Activated naive CD4-positive, alpha-beta T cell treated with anti-CD3 and anti-CD28 coated beads for 36 hours (primary cell): ENCODE measurements at regions of chr6 and their contacts with region 1.

Region 1: DNA sequence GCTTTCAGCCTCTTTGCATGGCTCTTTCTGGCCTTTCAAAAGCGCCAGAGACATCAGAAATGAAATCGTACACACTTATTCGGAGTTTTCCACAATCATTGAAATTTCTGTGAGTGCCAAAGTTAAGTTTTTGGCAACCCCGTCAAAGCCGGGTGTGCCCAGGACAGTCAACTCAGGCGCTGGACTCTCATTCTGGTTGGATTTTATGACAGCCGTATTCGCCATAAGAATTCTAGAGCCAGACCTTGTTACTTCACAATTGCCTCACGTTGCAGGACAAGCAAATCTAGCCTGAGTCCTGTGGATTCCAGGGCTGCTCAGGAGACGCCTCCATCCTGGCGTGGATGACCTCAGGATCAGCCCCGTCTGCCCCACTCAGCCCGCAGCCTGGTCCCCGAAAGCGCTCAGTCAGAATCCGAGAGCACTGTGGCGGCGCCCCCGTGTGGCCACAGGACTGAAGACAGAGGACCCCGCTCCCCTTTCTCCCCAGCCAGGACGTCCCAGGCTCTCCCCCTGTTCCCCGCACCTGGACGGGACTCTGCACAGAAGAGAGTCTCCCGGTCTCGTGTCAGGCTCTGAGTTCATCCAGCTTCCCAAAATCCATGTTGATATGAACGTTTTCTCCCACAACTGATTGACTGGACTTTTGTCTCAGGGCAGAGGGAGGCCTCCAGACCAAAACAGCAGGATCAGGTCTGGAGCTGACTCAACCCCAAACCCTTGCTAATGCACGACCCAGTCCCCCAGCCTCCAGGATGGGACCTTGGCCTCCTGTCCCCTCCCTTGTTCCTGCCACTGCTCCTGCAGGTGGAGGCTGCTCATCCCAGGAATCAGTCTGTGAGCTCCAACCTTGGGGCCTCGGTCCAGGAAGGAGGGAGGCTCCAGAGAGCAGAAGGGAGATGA is 38.2 kb downstream of the MICA start:
- DNase-seq: peak; percentile 89
- H3K4me3 Mint-ChIP-seq: no peak overlapping the region
- H3K27ac Mint-ChIP-seq: no peak overlapping the region
- H3K4me1 Mint-ChIP-seq: peaks cover 4% of the 10 kb centered on the region
- H3K27me3 Mint-ChIP-seq: peaks cover 30% of the 10 kb centered on the region

Region 2: GRCh38 chr6:31396422-31397152 is 45.0 kb before region 1 on chr6:
- CTCF ChIA-PET with region 1: interaction called, 44 read pairs
- intact Hi-C with region 1: loop called (anchors 1 kb)
- DNase-seq: peak; percentile 95
- H3K4me3 Mint-ChIP-seq: no peak overlapping the region
- H3K27ac Mint-ChIP-seq: no peak overlapping the region
- H3K4me1 Mint-ChIP-seq: peaks cover 19% of the 10 kb centered on the region
- H3K27me3 Mint-ChIP-seq: no peaks in the 10 kb centered on the region

Region 3: GRCh38 chr6:31403283-31403989 is 38.2 kb before region 1 on chr6 and contains the start of gene MICA:
- CTCF ChIA-PET with region 1: interaction called, 44 read pairs
- intact Hi-C with region 1: no loop called
- DNase-seq: peak; percentile 77
- H3K4me3 Mint-ChIP-seq: peak within 1 kb of the TSS; percentile 92
- H3K27ac Mint-ChIP-seq: peak within 1 kb of the TSS; percentile 17
- H3K4me1 Mint-ChIP-seq: peaks cover 62% of the 10 kb centered on the region
- H3K27me3 Mint-ChIP-seq: no peaks in the 10 kb centered on the region
- total RNA-seq, gene MICA: 10.2 to 10.4 TPM

Region 4: DNA sequence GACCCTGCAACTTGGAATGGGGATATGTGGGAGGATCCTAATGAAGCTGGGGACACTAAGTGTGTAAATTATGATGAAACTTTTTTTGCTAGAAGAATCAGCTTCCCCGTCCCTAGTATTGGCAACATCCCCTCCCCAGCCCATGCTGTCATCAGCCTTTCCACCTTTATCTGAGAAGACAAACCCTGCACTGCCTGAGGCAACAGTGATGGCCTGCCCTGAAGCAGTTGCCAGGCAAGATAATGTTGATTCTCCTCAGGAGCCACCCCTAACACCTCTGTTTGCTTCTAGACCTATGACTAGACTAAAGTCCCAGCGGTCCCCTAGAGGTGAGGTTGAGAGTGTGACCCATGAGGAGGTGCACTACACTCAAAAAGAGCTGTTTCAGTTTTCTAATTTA is 11.2 kb before region 1 on chr6:
- CTCF ChIA-PET with region 1: interaction called, 10 read pairs
- intact Hi-C with region 1: no loop called
- DNase-seq: no peak
- H3K4me3 Mint-ChIP-seq: no peak overlapping the region
- H3K27ac Mint-ChIP-seq: no peak overlapping the region
- H3K4me1 Mint-ChIP-seq: no peaks in the 10 kb centered on the region
- H3K27me3 Mint-ChIP-seq: no peaks in the 10 kb centered on the region